GM12878 (cell line): ENCODE measurements at regions of chr4 and their contacts with region 1.

Region 1: GRCh38 chr4:39365830-39366771 is at the start of gene RFC1:
- DNase-seq: peak; percentile 73
- ATAC-seq: peak; percentile 88
- H3K4me3 ChIP-seq: peak within 1 kb of the TSS; percentile 89
- H3K27ac ChIP-seq: peak within 1 kb of the TSS; percentile 68
- H3K4me1 ChIP-seq: peaks cover 3% of the 10 kb centered on the region
- H3K27me3 ChIP-seq: no peaks in the 10 kb centered on the region
- CTCF ChIP-seq: no peak
- EP300 ChIP-seq: no peak
- POLR2A ChIP-seq: peak; percentile 88
- RAD21 ChIP-seq: no peak
- polyA plus RNA-seq, gene RFC1: 24.1 to 30.0 TPM

Region 2: DNA sequence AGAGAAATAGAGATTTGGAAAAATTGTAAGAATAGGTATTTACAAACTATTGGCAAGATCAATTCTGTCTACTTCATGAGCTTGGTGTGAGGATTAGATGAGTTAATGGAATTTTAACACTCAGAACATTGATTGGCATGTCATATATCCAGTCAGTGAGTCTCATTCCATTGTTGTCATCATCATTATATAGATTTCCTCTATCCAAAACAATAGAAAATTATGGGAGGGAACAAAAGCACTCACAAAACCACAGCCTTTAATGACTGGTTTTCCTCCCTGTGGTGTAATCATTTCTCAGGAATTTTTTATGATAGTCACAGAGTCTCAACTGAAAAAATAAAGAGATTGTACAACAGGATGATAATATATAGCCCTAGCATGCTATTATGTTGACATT is 282.9 kb before region 1 on chr4:
- CTCF ChIA-PET with region 1: no interaction called
- POLR2A ChIA-PET with region 1: no interaction called
- RAD21 ChIA-PET with region 1: no interaction called
- SMC1A ChIA-PET with region 1: no interaction called
- in situ Hi-C with region 1: no loop called
- intact Hi-C with region 1: no loop called
- DNase-seq: no peak
- ATAC-seq: no peak
- H3K4me3 ChIP-seq: no peak overlapping the region
- H3K27ac ChIP-seq: no peak overlapping the region
- H3K4me1 ChIP-seq: no peaks in the 10 kb centered on the region
- H3K27me3 ChIP-seq: no peaks in the 10 kb centered on the region
- CTCF ChIP-seq: no peak
- EP300 ChIP-seq: no peak
- POLR2A ChIP-seq: no peak
- RAD21 ChIP-seq: no peak

Region 3: DNA sequence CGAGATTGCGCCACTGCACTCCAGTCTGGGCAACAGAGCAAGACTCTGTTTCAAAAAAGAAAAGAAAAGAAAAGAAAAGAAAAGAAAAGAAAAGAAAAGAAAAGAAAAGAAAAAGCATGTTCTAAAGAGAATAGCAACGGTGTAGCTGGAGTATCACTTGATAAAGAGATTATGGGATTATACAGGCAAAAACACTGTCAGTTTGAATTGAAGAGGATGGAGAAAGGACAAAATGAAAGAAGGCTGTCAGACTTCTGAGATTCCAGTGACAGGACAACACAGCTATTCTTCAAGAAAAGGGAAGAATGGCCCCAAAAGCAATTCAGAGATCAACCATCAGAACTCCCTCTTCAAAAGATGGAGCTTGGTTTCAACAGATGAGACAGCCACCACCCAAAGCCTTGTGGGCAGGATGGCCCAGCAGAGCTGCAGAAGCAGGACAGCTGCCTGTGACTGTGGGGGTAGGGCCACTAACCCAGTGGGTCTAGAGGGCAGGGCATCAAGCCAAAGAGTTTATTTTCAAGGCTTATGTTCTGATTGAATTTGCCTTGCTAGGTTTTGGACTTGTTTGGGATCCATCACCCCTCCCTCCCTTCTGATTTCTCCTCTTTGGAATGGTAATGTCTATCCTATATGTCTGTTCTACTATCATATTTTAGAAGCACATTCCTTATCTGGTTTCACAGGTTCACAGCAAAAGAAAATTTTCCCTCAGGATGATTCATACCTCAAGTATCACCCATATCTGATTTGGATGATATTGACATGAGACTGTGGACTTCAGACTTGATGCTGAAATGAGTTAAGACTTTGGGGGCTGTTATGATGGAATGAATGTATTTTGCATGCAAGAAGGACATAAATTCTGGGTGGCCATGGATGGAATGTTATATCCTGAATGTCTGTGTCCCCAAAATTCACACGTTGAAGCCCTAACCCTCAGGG is 17.5 kb before region 1 on chr4:
- CTCF ChIA-PET with region 1: interaction called, 8 read pairs
- POLR2A ChIA-PET with region 1: interaction called, 27 read pairs
- RAD21 ChIA-PET with region 1: interaction called, 18 read pairs
- SMC1A ChIA-PET with region 1: interaction called, 51 read pairs
- in situ Hi-C with region 1: no loop called
- intact Hi-C with region 1: no loop called
- DNase-seq: no peak
- ATAC-seq: no peak
- H3K4me3 ChIP-seq: no peak overlapping the region
- H3K27ac ChIP-seq: no peak overlapping the region
- H3K4me1 ChIP-seq: peaks cover 7% of the 10 kb centered on the region
- H3K27me3 ChIP-seq: no peaks in the 10 kb centered on the region
- CTCF ChIP-seq: no peak
- EP300 ChIP-seq: no peak
- POLR2A ChIP-seq: no peak
- RAD21 ChIP-seq: no peak

Region 4: DNA sequence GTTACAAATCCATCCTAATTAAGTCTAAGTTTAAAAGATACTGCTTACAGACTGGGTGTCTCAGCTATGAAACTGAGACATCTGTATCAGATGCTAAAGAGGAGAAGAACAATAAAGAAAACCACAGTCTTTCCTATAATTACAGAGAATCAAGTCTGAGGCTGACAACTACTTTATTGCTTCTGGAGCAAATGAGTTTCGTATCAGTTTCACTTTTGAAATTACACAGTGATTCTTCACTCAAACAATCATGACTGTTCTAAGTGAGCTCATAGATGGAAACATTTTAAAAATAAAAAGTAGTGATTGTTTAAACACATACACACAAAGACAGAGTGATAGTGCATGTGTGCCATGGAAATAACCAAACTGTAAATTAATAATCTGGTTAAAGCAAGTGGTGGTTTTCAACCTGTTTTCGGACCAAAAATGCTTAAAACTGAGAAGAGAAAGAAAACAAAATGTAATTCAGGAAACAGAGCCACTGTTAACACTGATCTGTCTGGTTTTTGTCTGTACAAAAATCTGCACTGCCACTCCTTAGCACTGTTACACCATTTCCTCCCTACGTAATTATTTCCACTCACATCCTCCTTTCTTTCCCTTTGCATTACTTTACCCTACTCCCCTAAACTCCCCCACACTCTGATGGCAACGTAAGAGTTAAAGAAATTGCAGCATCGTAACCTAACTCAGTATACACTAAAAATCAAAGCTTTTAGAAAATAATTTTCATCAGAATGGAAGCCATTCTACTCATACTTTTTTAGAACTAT is 12.4 kb before region 1 on chr4:
- CTCF ChIA-PET with region 1: interaction called, 8 read pairs
- POLR2A ChIA-PET with region 1: interaction called, 27 read pairs
- RAD21 ChIA-PET with region 1: interaction called, 18 read pairs
- SMC1A ChIA-PET with region 1: interaction called, 51 read pairs
- in situ Hi-C with region 1: no loop called
- intact Hi-C with region 1: no loop called
- DNase-seq: peak; percentile 85
- ATAC-seq: peak; percentile 85
- H3K4me3 ChIP-seq: peak overlapping the region; percentile 48; the same call in 1 of the 2 replicates
- H3K27ac ChIP-seq: peak overlapping the region; percentile 70
- H3K4me1 ChIP-seq: peaks cover 42% of the 10 kb centered on the region
- H3K27me3 ChIP-seq: no peaks in the 10 kb centered on the region
- CTCF ChIP-seq: no peak
- EP300 ChIP-seq: peak; percentile 75 to 77; a peak in 3 of 4 replicates
- POLR2A ChIP-seq: no peak
- RAD21 ChIP-seq: no peak

Region 5: GRCh38 chr4:39394702-39395101 is 28.6 kb after region 1 on chr4:
- CTCF ChIA-PET with region 1: no interaction called
- POLR2A ChIA-PET with region 1: no interaction called
- RAD21 ChIA-PET with region 1: no interaction called
- SMC1A ChIA-PET with region 1: no interaction called
- in situ Hi-C with region 1: no loop called
- intact Hi-C with region 1: no loop called
- DNase-seq: no peak
- ATAC-seq: no peak
- H3K4me3 ChIP-seq: no peak overlapping the region
- H3K27ac ChIP-seq: no peak overlapping the region
- H3K4me1 ChIP-seq: no peaks in the 10 kb centered on the region
- H3K27me3 ChIP-seq: no peaks in the 10 kb centered on the region
- CTCF ChIP-seq: no peak
- EP300 ChIP-seq: no peak
- POLR2A ChIP-seq: no peak
- RAD21 ChIP-seq: no peak

Region 6: GRCh38 chr4:39763714-39764572 is 397.8 kb after region 1 on chr4:
- CTCF ChIA-PET with region 1: no interaction called
- POLR2A ChIA-PET with region 1: interaction called, 11 read pairs
- RAD21 ChIA-PET with region 1: no interaction called
- SMC1A ChIA-PET with region 1: no interaction called
- in situ Hi-C with region 1: no loop called
- intact Hi-C with region 1: no loop called
- DNase-seq: peak; percentile 66
- ATAC-seq: peak; percentile 87
- H3K4me3 ChIP-seq: no peak overlapping the region
- H3K27ac ChIP-seq: peak overlapping the region; percentile 61
- H3K4me1 ChIP-seq: peaks cover 19% of the 10 kb centered on the region
- H3K27me3 ChIP-seq: no peaks in the 10 kb centered on the region
- CTCF ChIP-seq: no peak
- EP300 ChIP-seq: peak; percentile 39 to 77; a peak in 2 of 4 replicates
- POLR2A ChIP-seq: no peak
- RAD21 ChIP-seq: no peak

Region 7: DNA sequence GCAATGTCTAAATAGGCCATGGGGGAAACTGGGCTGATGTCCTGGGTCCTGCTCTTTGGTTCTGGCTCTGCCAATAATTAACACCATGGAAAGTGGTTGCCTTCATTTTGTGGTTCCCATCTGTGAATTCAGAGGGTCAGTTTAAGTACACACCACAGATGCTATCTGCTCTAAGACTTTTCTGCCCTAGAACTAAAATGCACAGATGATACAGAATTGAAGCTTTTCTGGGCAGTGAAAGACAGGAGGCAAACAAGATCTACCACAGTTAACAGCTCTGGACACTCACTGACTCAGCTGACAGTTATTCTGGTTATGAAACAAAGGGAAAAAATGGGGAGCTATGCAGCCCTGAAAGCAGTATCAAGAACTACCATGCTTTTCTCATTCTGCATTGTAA is 1810.9 kb after region 1 on chr4:
- CTCF ChIA-PET with region 1: no interaction called
- POLR2A ChIA-PET with region 1: no interaction called
- RAD21 ChIA-PET with region 1: no interaction called
- SMC1A ChIA-PET with region 1: no interaction called
- in situ Hi-C with region 1: loop called (anchors 25 kb)
- intact Hi-C with region 1: no loop called
- DNase-seq: no peak
- ATAC-seq: peak; percentile 41
- H3K4me3 ChIP-seq: no peak overlapping the region
- H3K27ac ChIP-seq: peak overlapping the region; percentile 28; the same call in 1 of the 2 replicates
- H3K4me1 ChIP-seq: peaks cover 16% of the 10 kb centered on the region
- H3K27me3 ChIP-seq: no peaks in the 10 kb centered on the region
- CTCF ChIP-seq: no peak; a peak in 1 of 6 replicates
- EP300 ChIP-seq: no peak
- POLR2A ChIP-seq: no peak
- RAD21 ChIP-seq: no peak